ENCODE measurements at regions of chr17 and their contacts with region 1.

Region 1: DNA sequence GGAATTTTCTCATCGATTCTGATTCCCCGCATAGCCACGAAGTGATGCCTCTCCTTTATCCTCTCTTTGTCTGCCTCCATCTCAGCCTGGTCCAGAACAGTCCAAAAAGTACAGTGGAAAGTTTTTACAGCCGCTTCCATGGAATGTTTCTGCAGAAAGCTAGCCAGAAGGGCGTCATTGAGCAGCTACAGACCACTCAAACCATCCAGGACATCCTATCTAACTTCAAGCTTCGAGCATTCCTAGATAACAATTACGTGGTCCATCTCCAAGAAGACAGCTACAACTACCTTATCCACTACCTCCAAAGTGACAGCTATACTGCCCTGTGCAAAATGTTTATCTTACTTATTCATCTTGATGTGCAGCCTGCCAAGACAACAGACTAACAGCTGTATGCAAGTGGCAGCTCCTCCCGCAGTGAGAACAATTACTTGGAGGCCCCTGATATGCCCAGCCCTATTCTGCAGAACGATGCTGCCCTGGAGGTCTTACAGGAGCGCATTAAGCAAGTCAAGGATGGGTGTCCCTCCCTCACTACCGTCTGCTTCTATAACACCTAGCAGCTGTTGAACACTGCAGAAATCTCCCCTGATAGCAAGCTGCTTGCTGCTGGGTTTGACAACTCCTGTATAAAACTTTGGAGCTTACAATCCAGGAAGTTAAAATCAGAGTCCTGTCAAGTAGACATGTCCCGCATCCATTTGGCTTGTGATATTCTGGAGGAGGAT is 38.9 kb downstream of the SLFN12L start:
- DNase-seq: no peak
- H3K4me3 ChIP-seq: no peak overlapping the region
- H3K27ac ChIP-seq: no peak overlapping the region
- H3K4me1 ChIP-seq: no peaks in the 10 kb centered on the region
- H3K27me3 ChIP-seq: peaks cover 37% of the 10 kb centered on the region
- CTCF ChIP-seq: no peak

Region 2: GRCh38 chr17:34917381-34917780 is 581.2 kb before region 1 on chr17:
- CTCF ChIA-PET with region 1: interaction called, 10 read pairs
- dilution Hi-C with region 1: no loop called
- in situ Hi-C with region 1: no loop called
- intact Hi-C with region 1: no loop called
- DNase-seq: no peak
- H3K4me3 ChIP-seq: no peak overlapping the region
- H3K27ac ChIP-seq: no peak overlapping the region
- H3K4me1 ChIP-seq: no peaks in the 10 kb centered on the region
- H3K27me3 ChIP-seq: no peaks in the 10 kb centered on the region
- CTCF ChIP-seq: no peak

Region 3: DNA sequence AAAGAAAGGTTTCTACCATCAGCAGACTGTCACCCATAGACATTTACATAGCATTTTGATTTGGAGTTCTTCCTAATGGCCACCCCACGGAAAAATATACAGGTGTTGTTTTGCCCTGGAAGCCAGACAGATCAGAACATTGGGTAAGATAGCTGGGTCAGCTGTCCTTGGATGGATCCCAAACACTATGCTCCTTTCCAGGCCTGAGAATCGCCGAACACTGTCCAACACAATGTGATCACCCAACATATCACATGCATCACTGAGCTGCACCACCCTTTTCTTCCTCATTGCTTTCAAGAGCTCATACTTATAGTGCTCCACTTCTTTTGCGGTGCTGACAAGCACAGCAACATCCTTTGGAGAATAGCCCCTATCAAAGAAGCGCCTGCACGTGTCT is 146.3 kb before region 1 on chr17:
- CTCF ChIA-PET with region 1: no interaction called
- dilution Hi-C with region 1: no loop called
- in situ Hi-C with region 1: no loop called
- intact Hi-C with region 1: no loop called
- DNase-seq: no peak
- H3K4me3 ChIP-seq: no peak overlapping the region
- H3K27ac ChIP-seq: no peak overlapping the region
- H3K4me1 ChIP-seq: no peaks in the 10 kb centered on the region
- H3K27me3 ChIP-seq: peaks cover 4% of the 10 kb centered on the region
- CTCF ChIP-seq: no peak

Region 4: GRCh38 chr17:35460354-35460851 is 38.2 kb before region 1 on chr17:
- CTCF ChIA-PET with region 1: no interaction called
- dilution Hi-C with region 1: loop called (anchors 5 kb)
- in situ Hi-C with region 1: no loop called
- intact Hi-C with region 1: no loop called
- DNase-seq: peak; percentile 35
- H3K4me3 ChIP-seq: peak overlapping the region in 2 of 3 experiments; percentile 30 to 39
- H3K27ac ChIP-seq: no peak overlapping the region
- H3K4me1 ChIP-seq: peaks cover 3% of the 10 kb centered on the region
- H3K27me3 ChIP-seq: peaks cover 4% of the 10 kb centered on the region
- CTCF ChIP-seq: no peak

Region 5: DNA sequence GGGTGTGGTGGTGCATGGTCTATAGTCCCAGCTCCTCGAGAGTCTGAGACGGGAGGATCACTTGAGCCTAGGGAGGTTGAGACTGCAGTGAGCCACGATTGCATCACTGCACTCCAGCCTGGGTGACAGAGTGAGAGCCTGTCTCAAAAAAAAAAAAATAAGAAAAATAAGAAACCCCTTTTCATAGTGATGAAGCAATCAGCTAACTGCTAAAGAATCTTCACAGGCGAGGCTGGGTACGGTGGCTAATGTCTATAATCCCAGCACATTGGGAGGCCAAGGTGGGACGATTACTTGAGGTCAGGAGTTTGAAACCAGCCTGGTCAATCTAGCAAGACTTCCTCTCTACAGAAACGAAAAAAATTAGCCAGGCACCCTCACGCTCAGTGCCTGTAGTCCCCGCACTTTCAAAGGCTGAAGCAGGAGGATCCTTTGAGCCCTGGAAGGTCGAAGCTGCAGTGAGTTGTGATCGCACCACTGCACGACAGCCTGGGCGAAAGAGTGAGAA is 38.1 kb after region 1 on chr17:
- CTCF ChIA-PET with region 1: no interaction called
- dilution Hi-C with region 1: no loop called
- in situ Hi-C with region 1: no loop called
- intact Hi-C with region 1: no loop called
- DNase-seq: no peak
- H3K4me3 ChIP-seq: no peak overlapping the region
- H3K27ac ChIP-seq: no peak overlapping the region
- H3K4me1 ChIP-seq: no peaks in the 10 kb centered on the region
- H3K27me3 ChIP-seq: peaks cover 2% of the 10 kb centered on the region
- CTCF ChIP-seq: no peak

Measured in mammary epithelial cell (primary cell).